ENCODE measurements at regions of chr17 and their contacts with region 1.

Region 1: DNA sequence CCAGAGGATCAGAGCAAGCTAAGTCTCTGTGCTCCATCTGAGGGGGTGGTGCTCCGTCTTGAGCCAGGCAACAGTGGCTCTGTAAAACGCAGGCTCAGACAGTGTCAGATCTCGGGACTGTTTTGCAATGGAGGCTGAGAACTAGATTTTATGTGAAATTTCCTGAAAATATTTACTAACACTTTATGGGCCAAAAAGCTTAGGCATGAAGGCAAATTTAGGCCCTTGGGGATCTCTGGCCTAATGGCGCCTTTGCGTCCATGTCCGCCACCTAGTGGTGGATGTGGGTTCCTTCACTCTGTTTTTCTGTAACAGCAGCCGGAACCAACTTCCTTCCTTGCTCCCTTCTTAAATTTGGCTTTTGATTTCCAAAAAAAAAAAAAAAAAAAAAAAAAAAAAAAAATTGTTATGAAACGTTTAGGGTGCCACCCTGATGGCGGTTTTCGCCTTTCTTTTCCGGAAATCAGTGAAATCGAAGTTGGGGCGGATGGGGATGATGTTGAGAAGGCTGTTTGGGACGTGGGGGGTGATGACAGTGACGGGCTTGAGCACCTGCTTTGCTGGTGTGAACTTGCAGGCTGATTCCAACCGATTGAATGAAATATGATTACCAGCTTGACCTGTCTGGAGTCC is 14.0 kb upstream of the ELAC2 start:
- DNase-seq: peak; percentile 56
- ATAC-seq: peak; percentile 61; the same call in 1 of the 2 replicates
- H3K4me3 Mint-ChIP-seq: no peak overlapping the region
- H3K27ac Mint-ChIP-seq: no peak overlapping the region
- H3K4me1 Mint-ChIP-seq: peaks cover 7% of the 10 kb centered on the region
- H3K27me3 Mint-ChIP-seq: peaks cover 8% of the 10 kb centered on the region
- CTCF ChIP-seq: peak; percentile 86

Region 2: DNA sequence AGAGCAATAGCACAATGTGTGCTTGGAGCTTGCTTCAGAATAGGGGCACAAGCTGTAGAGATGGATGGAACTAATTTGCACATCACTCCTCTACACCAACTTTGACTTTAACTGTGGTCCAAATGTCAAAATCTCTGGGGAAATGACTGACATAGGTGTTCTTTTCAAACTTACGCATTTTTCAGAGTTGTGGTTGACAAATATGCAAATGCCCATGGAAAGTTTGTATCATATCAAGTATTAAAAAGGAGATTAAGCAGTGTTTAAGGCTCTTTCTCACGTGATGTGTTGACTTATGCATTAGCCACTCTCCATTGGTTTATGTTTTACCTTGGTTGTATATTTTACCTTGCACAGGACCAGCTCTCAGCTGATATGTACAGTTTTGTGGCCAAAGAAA is 91.1 kb before region 1 on chr17:
- CTCF ChIA-PET with region 1: no interaction called
- POLR2A ChIA-PET with region 1: no interaction called
- DNase-seq: no peak
- ATAC-seq: no peak
- H3K4me3 Mint-ChIP-seq: no peak overlapping the region
- H3K27ac Mint-ChIP-seq: no peak overlapping the region
- H3K4me1 Mint-ChIP-seq: no peaks in the 10 kb centered on the region
- H3K27me3 Mint-ChIP-seq: no peaks in the 10 kb centered on the region
- CTCF ChIP-seq: no peak

Region 3: DNA sequence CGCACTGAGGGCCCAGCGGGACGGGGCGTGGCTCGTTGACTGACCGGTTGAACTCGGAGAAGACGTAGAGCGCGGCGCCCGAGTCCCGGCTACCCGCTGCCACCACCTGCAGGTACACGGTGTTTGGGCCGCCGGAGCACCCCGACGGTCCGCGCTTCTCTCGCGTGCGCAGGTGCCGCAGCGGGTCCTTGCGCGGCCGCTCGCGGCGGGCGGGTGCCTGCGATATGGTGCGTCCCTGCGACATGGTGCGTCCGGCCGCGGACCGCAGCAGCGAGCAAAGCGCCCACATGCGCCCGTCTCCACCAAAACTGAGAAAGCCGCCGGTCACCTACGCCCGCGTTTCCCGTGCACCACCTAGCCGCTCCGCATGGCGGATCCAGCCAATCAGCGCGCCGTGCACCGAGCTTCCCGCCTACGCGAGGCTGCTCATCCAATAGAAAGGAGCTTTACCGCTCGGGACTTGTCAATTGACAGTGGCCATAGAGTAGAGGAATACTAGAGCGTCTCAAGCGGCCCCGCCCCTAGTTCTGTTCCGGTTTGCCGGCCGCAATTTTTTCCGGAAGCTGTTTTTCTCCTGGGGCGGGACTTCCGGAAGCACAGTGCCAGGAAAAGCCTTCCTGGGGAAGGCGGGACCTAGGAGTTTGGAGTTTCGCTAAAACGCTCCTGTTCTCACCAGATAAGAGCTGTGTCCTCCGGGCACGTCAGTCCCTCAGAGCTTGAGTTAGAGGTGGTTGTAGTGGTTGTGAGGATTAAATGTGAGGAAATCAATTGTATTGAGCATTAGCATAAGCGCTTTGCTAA is 14.0 kb before region 1 on chr17 and contains the start of gene ELAC2:
- CTCF ChIA-PET with region 1: interaction called, 48 read pairs
- POLR2A ChIA-PET with region 1: interaction called, 3 read pairs
- DNase-seq: peak; percentile 97
- ATAC-seq: peak; percentile 98
- H3K4me3 Mint-ChIP-seq: peak within 1 kb of the TSS; percentile 95
- H3K27ac Mint-ChIP-seq: peak within 1 kb of the TSS; percentile 100
- H3K4me1 Mint-ChIP-seq: peaks cover 19% of the 10 kb centered on the region
- H3K27me3 Mint-ChIP-seq: no peaks in the 10 kb centered on the region; the same call in 1 of the 2 replicates
- CTCF ChIP-seq: no peak
- total RNA-seq, gene ELAC2: 76.3 to 86.9 TPM (median 77.7 TPM) in 3 replicates

Region 4: GRCh38 chr17:13047011-13047606 is 15.3 kb after region 1 on chr17:
- CTCF ChIA-PET with region 1: interaction called, 18 read pairs
- POLR2A ChIA-PET with region 1: no interaction called
- DNase-seq: no peak
- ATAC-seq: no peak
- H3K4me3 Mint-ChIP-seq: no peak overlapping the region
- H3K27ac Mint-ChIP-seq: no peak overlapping the region
- H3K4me1 Mint-ChIP-seq: no peaks in the 10 kb centered on the region
- H3K27me3 Mint-ChIP-seq: no peaks in the 10 kb centered on the region; the same call in 1 of the 2 replicates
- CTCF ChIP-seq: no peak

Region 5: DNA sequence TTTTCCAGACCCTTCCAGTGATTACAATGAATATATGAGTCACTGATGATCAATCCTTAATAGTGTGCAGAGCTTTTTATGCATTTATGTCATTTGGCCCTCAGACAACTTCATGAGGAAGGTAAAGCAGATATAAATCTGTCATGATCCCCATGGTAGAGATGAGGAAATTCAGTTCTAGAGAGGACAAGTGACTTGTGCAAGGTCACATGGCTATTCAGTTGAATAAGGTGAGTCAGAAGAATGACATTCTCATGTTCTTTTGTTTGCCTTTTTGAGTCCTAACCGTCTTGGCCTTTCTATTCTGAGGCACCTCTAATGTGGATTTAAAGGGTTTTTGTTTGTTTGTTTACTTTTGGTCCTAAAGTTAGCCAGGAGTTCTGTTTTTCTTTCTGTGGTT is 102.2 kb after region 1 on chr17:
- CTCF ChIA-PET with region 1: no interaction called
- POLR2A ChIA-PET with region 1: no interaction called
- DNase-seq: no peak
- ATAC-seq: no peak
- H3K4me3 Mint-ChIP-seq: no peak overlapping the region
- H3K27ac Mint-ChIP-seq: no peak overlapping the region
- H3K4me1 Mint-ChIP-seq: no peaks in the 10 kb centered on the region; the same call in 1 of the 2 replicates
- H3K27me3 Mint-ChIP-seq: no peaks in the 10 kb centered on the region; the same call in 1 of the 2 replicates
- CTCF ChIP-seq: no peak

Region 6: GRCh38 chr17:13283606-13284005 is 251.8 kb after region 1 on chr17:
- CTCF ChIA-PET with region 1: no interaction called
- POLR2A ChIA-PET with region 1: no interaction called
- DNase-seq: no peak
- ATAC-seq: no peak
- H3K4me3 Mint-ChIP-seq: no peak overlapping the region
- H3K27ac Mint-ChIP-seq: no peak overlapping the region; the same call in 1 of the 2 replicates
- H3K4me1 Mint-ChIP-seq: peaks cover 17% of the 10 kb centered on the region
- H3K27me3 Mint-ChIP-seq: no peaks in the 10 kb centered on the region
- CTCF ChIP-seq: no peak